Calu3 (cell line): ENCODE measurements at regions of chr9 and their contacts with region 1.

Region 1: DNA sequence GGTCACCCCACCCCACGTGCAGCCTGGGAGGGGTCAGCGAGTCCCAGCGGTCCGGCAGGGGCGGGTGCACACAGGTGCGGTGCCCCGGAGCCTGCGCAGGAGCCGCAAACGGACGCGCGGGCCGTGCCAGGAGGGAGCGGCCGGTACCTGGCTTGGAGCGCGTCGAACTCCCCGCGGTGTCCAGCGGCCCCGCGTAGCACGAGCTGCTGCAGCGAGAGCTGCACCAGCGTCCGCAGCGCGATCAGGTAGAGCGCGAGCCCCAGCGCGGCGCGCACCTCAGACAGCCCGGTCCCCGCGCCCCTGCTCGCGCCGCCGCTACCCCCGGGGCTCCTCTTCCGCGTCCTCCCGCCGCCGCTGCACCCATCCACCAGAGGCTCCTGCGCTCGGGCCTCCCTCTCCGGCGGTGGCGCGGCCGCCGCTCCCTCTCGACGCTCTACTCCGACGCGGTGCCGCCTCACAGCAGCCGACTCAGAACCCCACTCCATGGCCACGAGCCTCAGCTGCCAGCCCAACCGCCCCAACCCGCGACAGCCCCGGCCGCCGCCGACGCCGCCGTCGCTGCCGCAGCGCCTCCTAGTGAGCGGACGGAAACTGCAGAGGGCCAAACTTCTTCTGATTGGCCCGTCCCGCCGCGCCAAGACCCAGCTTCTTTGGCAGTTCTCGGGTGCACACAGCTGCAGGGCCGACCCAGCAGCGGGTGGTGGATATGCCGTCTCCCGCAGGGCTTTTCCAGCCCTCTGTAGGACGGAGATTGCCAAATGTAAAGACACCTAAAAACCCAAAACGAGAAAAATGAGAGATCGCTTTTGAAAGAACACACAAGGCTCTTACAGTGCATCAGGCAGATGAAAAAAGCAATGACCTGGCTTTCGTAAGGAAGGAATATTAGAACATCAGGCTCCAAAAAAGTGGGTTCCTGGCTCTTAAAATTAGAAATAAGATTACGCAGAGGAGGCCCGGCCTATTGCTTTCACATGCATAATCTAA is at the start of gene ERMP1:
- DNase-seq: peak; percentile 81
- H3K4me3 Mint-ChIP-seq: peak within 1 kb of the TSS; percentile 94
- H3K27ac Mint-ChIP-seq: no peak within 1 kb of the TSS
- H3K4me1 Mint-ChIP-seq: peaks cover 30% of the 10 kb centered on the region
- H3K27me3 Mint-ChIP-seq: no peaks in the 10 kb centered on the region
- CTCF ChIP-seq: peak; percentile 61
- total RNA-seq, gene ERMP1: 28.4 and 29.7 TPM in 2 replicates

Region 2: GRCh38 chr9:4866239-4866969 is 966.4 kb before region 1 on chr9:
- CTCF ChIA-PET with region 1: no interaction called
- intact Hi-C with region 1: no loop called
- DNase-seq: no peak
- H3K4me3 Mint-ChIP-seq: no peak overlapping the region
- H3K27ac Mint-ChIP-seq: no peak overlapping the region
- H3K4me1 Mint-ChIP-seq: no peaks in the 10 kb centered on the region
- H3K27me3 Mint-ChIP-seq: no peaks in the 10 kb centered on the region
- CTCF ChIP-seq: no peak

Region 3: DNA sequence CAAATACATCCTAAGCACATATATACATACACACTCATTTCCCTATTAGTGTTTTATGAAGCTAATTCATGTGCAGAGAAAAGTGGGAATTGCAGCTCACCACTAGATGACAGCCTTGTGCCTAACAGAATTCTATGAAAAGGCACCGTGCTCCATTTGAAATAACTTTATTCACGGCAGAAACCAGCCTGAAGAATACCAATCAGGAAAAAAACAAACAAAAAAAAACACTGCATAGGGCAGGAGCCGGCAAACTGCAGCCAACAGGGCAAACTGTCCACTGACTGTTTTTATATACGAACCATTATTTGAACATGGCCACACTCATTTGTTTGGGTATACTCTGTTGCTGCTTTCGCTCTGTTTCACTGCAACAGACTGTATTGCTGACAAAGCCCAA is 33.5 kb before region 1 on chr9:
- CTCF ChIA-PET with region 1: interaction called, 11 read pairs
- intact Hi-C with region 1: loop called (anchors 2 kb)
- DNase-seq: peak; percentile 12
- H3K4me3 Mint-ChIP-seq: no peak overlapping the region
- H3K27ac Mint-ChIP-seq: no peak overlapping the region
- H3K4me1 Mint-ChIP-seq: no peaks in the 10 kb centered on the region
- H3K27me3 Mint-ChIP-seq: no peaks in the 10 kb centered on the region
- CTCF ChIP-seq: peak; percentile 39

Region 4: GRCh38 chr9:5879419-5880181 is 46.8 kb after region 1 on chr9:
- CTCF ChIA-PET with region 1: no interaction called
- intact Hi-C with region 1: loop called (anchors 5 kb)
- DNase-seq: no peak
- H3K4me3 Mint-ChIP-seq: no peak overlapping the region
- H3K27ac Mint-ChIP-seq: no peak overlapping the region
- H3K4me1 Mint-ChIP-seq: peaks cover 2% of the 10 kb centered on the region
- H3K27me3 Mint-ChIP-seq: no peaks in the 10 kb centered on the region
- CTCF ChIP-seq: no peak

Region 5: GRCh38 chr9:5920860-5921328 is 88.1 kb after region 1 on chr9:
- CTCF ChIA-PET with region 1: no interaction called
- intact Hi-C with region 1: no loop called
- DNase-seq: no peak
- H3K4me3 Mint-ChIP-seq: no peak overlapping the region
- H3K27ac Mint-ChIP-seq: no peak overlapping the region
- H3K4me1 Mint-ChIP-seq: peaks cover 21% of the 10 kb centered on the region
- H3K27me3 Mint-ChIP-seq: no peaks in the 10 kb centered on the region
- CTCF ChIP-seq: no peak